ENCODE measurements at regions of chr6 and their contacts with region 1.

Region 1: GRCh38 chr6:113873043-113873667 is 16.0 kb downstream of the MARCKS start:
- DNase-seq: peak; percentile 51
- H3K4me3 ChIP-seq: no peak overlapping the region
- H3K27ac ChIP-seq: no peak overlapping the region
- H3K4me1 ChIP-seq: no peaks in the 10 kb centered on the region
- CTCF ChIP-seq: no peak

Region 2: GRCh38 chr6:113909234-113909856 is 36.2 kb after region 1 on chr6:
- CTCF ChIA-PET with region 1: no interaction called
- POLR2A ChIA-PET with region 1: no interaction called
- intact Hi-C with region 1: loop called (anchors 5 kb)
- DNase-seq: peak; percentile 68
- H3K4me3 ChIP-seq: no peak overlapping the region
- H3K27ac ChIP-seq: no peak overlapping the region
- H3K4me1 ChIP-seq: no peaks in the 10 kb centered on the region
- CTCF ChIP-seq: peak; percentile 89

Measured in OCI-LY7 (cell line).